Left cardiac atrium (tissue), 4 donors: ENCODE measurements at regions of chr4 and their contacts with region 1.

Region 1: DNA sequence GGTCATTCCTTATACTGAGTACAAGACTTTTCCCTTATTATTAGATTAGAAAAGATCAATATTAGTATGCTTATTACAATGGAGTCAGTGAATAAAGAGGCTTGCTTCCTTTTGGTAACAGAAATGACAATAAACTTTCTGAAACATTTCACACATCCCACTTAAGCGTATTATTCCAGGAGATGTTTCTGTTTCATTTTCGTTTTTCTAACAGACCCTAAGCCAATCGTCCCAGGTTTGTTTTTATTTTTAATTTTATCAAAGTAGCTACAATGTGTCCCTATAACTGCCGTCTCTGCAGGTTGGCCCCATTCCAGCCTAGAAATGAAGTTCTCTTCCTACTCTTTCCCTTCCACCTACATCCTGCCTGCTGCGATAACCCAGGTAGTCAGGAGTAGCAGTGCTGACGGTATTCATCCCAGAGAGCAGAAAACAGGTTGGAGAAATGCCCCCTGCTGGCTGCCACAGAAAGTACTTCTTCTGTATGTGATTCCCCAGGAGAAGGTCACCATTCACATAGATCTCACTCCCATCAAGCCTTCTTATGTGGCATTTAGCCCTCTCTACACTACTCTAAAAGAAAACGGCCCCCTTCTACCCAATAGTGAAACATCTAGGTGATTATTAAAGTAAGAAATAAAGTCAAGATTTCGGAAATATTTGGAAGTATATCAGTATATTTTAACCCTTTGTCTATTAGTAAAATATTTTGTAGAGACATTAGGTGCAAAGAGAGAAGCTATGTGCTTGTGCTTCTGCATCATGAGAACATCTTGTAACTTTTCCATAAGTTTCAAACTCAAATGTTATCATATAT is 40.4 kb downstream of the ENPEP start:
- DNase-seq: peak; percentile 65
- ATAC-seq: peak; percentile 86 to 96

Region 2: DNA sequence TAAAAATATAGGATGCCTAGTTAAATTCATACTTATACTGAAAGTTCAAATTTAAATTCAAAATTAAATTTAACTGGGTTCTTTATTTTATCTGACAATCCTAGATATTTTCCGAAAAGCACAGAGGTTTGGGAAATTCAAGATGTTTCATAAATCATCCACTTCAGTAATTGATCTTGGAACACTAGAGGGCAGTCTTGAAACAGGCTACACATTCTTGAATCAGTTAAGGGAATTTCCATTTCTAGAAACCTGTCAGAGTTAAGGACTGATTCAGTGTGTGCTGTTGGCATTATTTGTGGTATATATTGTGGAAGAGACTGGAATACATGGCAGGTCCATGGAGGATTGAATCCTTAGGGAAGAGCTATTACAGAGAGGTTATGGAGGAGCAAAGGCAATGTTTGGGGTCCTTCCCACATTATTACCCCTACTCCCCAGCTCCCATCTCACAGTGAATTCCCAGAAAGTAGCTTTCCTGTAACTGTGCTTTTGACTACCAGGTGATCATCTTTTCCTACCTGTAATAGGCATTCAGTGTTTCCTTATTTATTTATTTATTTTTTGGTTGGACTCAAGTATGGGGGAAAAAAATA is 510.8 kb before region 1 on chr4:
- intact Hi-C with region 1: loop called in 1 of 2 experiments (anchors 2 kb)
- DNase-seq: no peak
- ATAC-seq: peak; percentile 38 to 50

Region 3: DNA sequence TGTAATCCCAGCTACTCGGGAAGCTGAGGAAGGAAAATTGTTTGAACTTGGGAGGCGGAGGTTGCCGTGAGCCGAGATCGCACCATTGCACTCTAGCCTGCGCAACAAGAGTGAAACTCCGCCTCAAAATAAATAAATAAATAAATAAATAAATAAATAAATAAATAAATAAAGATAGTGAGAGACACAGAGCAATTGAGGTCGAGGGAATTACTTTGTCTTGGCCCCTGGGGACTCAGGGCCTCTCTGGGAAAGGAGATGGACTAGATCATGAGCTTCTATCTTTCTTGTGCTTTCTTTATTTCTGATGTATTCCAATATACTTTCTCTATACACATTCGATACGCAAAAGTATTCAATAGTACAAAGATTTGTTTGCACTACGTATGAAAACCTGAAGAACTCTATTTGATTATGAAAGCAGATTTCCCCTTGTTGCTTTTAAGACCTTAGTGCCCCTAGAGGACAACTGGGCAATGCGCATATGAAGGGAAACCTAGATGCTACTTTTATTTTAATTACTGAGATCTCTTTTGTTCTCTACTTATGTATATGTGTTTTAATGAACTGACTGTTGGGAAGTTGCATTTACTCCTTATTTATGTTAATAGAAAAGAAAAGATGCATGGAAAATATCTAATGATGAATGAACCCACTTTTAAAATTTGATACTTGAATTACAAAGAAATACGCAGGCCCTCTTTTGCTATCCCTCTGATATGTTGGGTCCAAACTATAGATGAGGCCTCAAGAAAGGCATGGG is 305.1 kb before region 1 on chr4:
- intact Hi-C with region 1: loop called in 1 of 2 experiments (anchors 10 kb)
- DNase-seq: no peak
- ATAC-seq: peak in 1 of 2 donors; percentile 37

Region 4: DNA sequence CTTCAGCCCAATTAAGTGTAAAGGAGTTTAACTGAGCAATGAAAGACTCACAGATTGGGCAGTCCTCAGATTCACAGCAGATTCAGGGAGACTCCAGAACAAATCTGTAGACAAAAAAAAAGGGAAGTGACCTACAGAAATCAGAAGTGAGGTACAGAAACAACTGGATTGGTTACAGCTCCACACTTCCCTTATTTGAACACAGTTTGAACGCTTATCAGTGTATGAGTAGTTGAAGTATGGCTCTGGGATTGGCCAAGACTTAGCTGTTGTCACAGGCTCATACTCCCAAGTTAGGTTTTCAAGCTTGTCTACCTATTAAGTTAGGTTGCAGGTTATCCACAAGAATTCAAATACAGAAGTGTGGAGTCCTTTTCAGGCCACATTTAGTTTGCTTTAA is 205.5 kb before region 1 on chr4:
- intact Hi-C with region 1: loop called (anchors 5 to 10 kb)
- DNase-seq: no peak
- ATAC-seq: no peak

Region 5: DNA sequence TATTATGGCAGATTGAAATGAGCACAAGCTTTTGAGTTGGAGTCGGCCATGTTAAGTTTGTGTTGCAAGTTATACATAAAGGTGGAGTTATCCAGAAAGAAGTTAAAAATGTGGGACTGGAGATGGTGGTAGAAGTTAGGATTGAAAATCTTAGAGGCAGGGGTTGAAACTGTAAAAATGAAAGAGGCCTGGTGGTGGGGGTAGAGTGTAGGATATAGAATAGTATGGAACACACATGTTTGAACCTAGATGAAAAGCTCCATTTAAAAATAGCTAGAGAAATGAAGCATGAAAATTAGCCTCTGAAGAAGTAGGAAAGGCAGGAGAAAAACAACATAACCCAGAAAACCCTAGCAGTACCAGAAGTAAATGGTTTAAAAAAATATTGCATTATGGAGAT is 172.2 kb before region 1 on chr4:
- intact Hi-C with region 1: loop called in 1 of 2 experiments (anchors 10 kb)
- DNase-seq: no peak
- ATAC-seq: no peak

Region 6: GRCh38 chr4:110475881-110476835 is 40.2 kb before region 1 on chr4 and contains the start of gene ENPEP:
- intact Hi-C with region 1: no loop called
- DNase-seq: peak; percentile 58
- ATAC-seq: peak; percentile 89
- total RNA-seq, gene ENPEP: 7.4 to 12.2 TPM